PC-9 (cell line): ENCODE measurements at regions of chr12 and their contacts with region 1.

Region 1: GRCh38 chr12:15584366-15585041 is 204.7 kb downstream of the EPS8 start:
- DNase-seq: no peak
- H3K4me3 ChIP-seq: no peak overlapping the region
- H3K27ac ChIP-seq: no peak overlapping the region
- H3K4me1 ChIP-seq: no peaks in the 10 kb centered on the region
- H3K27me3 ChIP-seq: no peaks in the 10 kb centered on the region
- CTCF ChIP-seq: peak; percentile 70

Region 2: GRCh38 chr12:15276088-15276698 is 308.3 kb before region 1 on chr12:
- CTCF ChIA-PET with region 1: interaction called, 4 read pairs
- POLR2A ChIA-PET with region 1: interaction called, 3 read pairs
- intact Hi-C with region 1: loop called (anchors 5 kb)
- DNase-seq: peak in 1 of 2 experiments; percentile 27
- H3K4me3 ChIP-seq: no peak overlapping the region
- H3K27ac ChIP-seq: no peak overlapping the region
- H3K4me1 ChIP-seq: peaks cover 13% of the 10 kb centered on the region; the same call in 1 of the 2 replicates
- H3K27me3 ChIP-seq: no peaks in the 10 kb centered on the region
- CTCF ChIP-seq: peak; percentile 85

Region 3: GRCh38 chr12:15336768-15337553 is 247.5 kb before region 1 on chr12:
- CTCF ChIA-PET with region 1: interaction called, 14 read pairs
- POLR2A ChIA-PET with region 1: no interaction called
- intact Hi-C with region 1: no loop called
- DNase-seq: peak in 1 of 2 experiments; percentile 1
- H3K4me3 ChIP-seq: no peak overlapping the region
- H3K27ac ChIP-seq: no peak overlapping the region
- H3K4me1 ChIP-seq: 0 out of 2 replicates have a peak, but pooled peaks cover 10% of the 10 kb centered on the region
- H3K27me3 ChIP-seq: no peaks in the 10 kb centered on the region
- CTCF ChIP-seq: no peak

Region 4: DNA sequence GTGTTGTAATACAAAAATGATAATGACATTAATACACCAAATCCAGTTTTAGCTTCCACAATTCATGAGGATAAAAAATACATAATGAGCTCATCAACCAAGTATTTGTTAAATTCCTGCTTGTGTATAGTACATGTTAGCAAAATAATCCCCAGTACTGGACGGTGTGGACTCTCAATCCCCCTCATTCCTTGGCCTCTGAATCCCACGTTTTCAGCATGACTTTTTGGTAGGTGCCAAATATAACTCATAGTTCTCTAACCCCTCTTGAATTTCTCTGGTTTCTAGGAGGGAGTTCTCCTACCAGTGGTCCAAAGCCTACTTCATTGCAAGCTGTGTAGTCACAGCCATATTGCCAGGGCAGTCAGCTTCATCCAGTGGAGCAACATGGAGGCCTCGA is 246.0 kb after region 1 on chr12:
- CTCF ChIA-PET with region 1: no interaction called
- POLR2A ChIA-PET with region 1: no interaction called
- intact Hi-C with region 1: no loop called
- DNase-seq: no peak
- H3K4me3 ChIP-seq: no peak overlapping the region
- H3K27ac ChIP-seq: no peak overlapping the region
- H3K4me1 ChIP-seq: peaks cover 25% of the 10 kb centered on the region
- H3K27me3 ChIP-seq: no peaks in the 10 kb centered on the region
- CTCF ChIP-seq: no peak

Region 5: GRCh38 chr12:16563504-16563903 is 979.0 kb after region 1 on chr12:
- CTCF ChIA-PET with region 1: interaction called, 11 read pairs
- POLR2A ChIA-PET with region 1: no interaction called
- intact Hi-C with region 1: no loop called
- DNase-seq: no peak
- H3K4me3 ChIP-seq: no peak overlapping the region
- H3K27ac ChIP-seq: no peak overlapping the region
- H3K4me1 ChIP-seq: no peaks in the 10 kb centered on the region
- H3K27me3 ChIP-seq: no peaks in the 10 kb centered on the region
- CTCF ChIP-seq: no peak